ENCODE measurements at regions of chr14 and their contacts with region 1.

Region 1: DNA sequence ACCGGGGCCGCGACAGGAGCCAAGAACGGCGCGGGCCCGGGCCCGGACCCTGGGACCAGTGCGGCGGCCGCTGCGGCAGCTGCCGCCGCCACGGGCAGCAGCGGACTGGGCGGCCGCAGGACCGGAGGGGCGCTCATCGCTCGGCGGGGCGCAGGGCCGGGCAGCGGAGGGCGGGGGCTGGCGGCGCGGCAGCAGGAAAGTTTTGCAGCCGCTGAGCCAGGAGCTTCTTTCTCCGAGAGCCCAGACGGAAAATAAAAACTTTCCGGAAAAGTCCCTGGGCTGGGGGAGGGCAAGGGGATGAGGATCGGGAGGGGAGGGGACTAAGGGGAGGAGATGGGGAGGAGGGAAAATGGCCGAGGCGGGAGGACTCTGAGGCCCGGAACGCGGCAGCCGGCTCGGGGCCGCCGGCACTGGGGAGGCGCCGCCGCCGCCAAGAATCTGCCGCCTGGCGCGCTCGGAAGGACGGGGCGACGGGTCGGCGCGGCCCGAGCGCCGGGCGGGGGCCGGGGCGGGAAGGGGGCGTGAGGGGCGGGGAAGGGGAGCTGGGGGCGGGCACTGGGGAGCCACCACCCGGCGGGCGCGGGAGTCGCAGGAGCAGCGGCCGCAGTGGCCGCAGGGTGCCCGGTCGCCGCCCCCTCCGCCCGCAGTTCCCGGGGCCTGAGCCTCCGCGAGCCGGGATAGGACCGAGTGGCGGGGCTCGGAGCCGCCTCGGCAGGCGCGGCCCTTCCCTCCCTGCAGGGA is at the start of gene PRKD1:
- DNase-seq: peak; percentile 62
- H3K4me3 ChIP-seq: peak within 1 kb of the TSS; percentile 56 to 73 (median 57)
- H3K27ac ChIP-seq: peak within 1 kb of the TSS; percentile 31
- H3K4me1 ChIP-seq: peaks cover 13% of the 10 kb centered on the region
- H3K27me3 ChIP-seq: peaks cover 0 to 2% of the 10 kb centered on the region in 2 experiments
- CTCF ChIP-seq: peak in 1 of 2 donors; percentile 22
- POLR2A ChIP-seq: no peak
- total RNA-seq, gene PRKD1: 10.3 and 10.9 TPM in 2 replicates

Region 2: GRCh38 chr14:29236848-29237247 is 690.7 kb before region 1 on chr14:
- CTCF ChIA-PET with region 1: no interaction called
- POLR2A ChIA-PET with region 1: no interaction called
- dilution Hi-C with region 1: no loop called
- intact Hi-C with region 1: loop called (anchors 10 kb)
- DNase-seq: peak; percentile 80
- H3K4me3 ChIP-seq: peak overlapping the region in 1 of 3 experiments; percentile 16
- H3K27ac ChIP-seq: peak overlapping the region; percentile 79
- H3K4me1 ChIP-seq: peaks cover 62% of the 10 kb centered on the region
- H3K27me3 ChIP-seq: no peaks in the 10 kb centered on the region
- CTCF ChIP-seq: no peak
- POLR2A ChIP-seq: no peak

Region 3: DNA sequence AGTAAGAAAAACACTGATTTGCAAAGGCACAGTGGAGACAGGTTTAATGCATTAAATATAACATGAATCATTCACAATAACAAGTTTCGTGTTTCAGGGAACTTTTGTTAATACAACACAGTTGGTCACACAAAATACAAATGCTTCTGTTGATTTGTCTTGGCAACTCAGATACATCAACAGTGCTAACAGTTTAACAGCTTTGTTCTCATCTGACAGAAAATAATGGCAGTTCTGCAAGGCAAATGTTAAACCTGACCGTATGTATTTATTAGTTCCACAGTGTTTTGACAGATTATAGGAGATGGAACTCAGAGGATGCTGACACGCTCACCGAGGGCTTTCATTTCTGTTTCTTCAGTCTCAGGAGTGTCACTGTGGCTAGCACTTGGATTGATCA is 350.6 kb before region 1 on chr14:
- CTCF ChIA-PET with region 1: no interaction called
- POLR2A ChIA-PET with region 1: no interaction called
- dilution Hi-C with region 1: no loop called
- intact Hi-C with region 1: loop called (anchors 10 kb)
- DNase-seq: no peak
- H3K4me3 ChIP-seq: no peak overlapping the region
- H3K27ac ChIP-seq: no peak overlapping the region
- H3K4me1 ChIP-seq: no peaks in the 10 kb centered on the region
- H3K27me3 ChIP-seq: no peaks in the 10 kb centered on the region
- CTCF ChIP-seq: no peak
- POLR2A ChIP-seq: no peak

Region 4: DNA sequence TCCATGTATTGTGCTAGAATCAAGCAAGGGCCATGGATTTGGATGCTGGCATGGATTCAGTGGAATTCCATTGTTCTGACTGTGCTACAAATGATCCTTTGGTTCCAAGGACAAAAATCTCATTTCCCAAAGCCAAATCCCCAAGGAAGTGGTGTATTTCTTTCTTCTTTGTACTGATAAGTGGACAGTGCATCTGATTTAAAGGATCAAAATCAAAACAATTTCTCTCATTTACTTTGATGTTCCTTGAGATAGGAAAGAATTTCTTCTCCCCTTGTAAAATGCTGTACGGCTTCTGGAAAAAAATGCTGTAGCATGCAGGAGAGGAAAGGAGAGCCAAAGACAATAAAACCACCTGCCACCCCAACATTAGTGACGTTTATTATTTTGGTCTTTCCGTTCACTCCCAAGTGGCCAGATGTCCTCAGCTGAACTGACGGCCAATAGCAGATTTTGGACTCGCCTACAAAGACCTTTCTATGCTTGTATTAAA is 185.6 kb before region 1 on chr14:
- CTCF ChIA-PET with region 1: interaction called, 3 read pairs
- POLR2A ChIA-PET with region 1: no interaction called
- dilution Hi-C with region 1: no loop called
- intact Hi-C with region 1: loop called (anchors 2 kb)
- DNase-seq: peak; percentile 84
- H3K4me3 ChIP-seq: no peak overlapping the region
- H3K27ac ChIP-seq: peak overlapping the region; percentile 59
- H3K4me1 ChIP-seq: peaks cover 23% of the 10 kb centered on the region
- H3K27me3 ChIP-seq: no peaks in the 10 kb centered on the region
- CTCF ChIP-seq: no peak
- POLR2A ChIP-seq: no peak

Region 5: GRCh38 chr14:30005114-30005808 is 77.7 kb after region 1 on chr14:
- CTCF ChIA-PET with region 1: no interaction called
- POLR2A ChIA-PET with region 1: no interaction called
- dilution Hi-C with region 1: no loop called
- intact Hi-C with region 1: no loop called
- DNase-seq: peak; percentile 53
- H3K4me3 ChIP-seq: no peak overlapping the region
- H3K27ac ChIP-seq: no peak overlapping the region
- H3K4me1 ChIP-seq: no peaks in the 10 kb centered on the region
- H3K27me3 ChIP-seq: peaks cover 0 to 6% of the 10 kb centered on the region in 2 experiments
- CTCF ChIP-seq: peak; percentile 29 to 56
- POLR2A ChIP-seq: no peak

Region 6: GRCh38 chr14:30558675-30559555 is 631.4 kb after region 1 on chr14 and contains the start of gene G2E3:
- CTCF ChIA-PET with region 1: no interaction called
- POLR2A ChIA-PET with region 1: no interaction called
- dilution Hi-C with region 1: no loop called
- intact Hi-C with region 1: loop called (anchors 5 kb)
- DNase-seq: peak; percentile 89
- H3K4me3 ChIP-seq: peak within 1 kb of the TSS; percentile 90 to 97 (median 94)
- H3K27ac ChIP-seq: peak within 1 kb of the TSS; percentile 66
- H3K4me1 ChIP-seq: peaks cover 12% of the 10 kb centered on the region
- H3K27me3 ChIP-seq: no peaks in the 10 kb centered on the region
- CTCF ChIP-seq: no peak
- POLR2A ChIP-seq: peak; percentile 86
- total RNA-seq, gene G2E3: 26.6 and 34.8 TPM in 2 replicates